ENCODE measurements at regions of chr1 and their contacts with region 1.

Region 1: DNA sequence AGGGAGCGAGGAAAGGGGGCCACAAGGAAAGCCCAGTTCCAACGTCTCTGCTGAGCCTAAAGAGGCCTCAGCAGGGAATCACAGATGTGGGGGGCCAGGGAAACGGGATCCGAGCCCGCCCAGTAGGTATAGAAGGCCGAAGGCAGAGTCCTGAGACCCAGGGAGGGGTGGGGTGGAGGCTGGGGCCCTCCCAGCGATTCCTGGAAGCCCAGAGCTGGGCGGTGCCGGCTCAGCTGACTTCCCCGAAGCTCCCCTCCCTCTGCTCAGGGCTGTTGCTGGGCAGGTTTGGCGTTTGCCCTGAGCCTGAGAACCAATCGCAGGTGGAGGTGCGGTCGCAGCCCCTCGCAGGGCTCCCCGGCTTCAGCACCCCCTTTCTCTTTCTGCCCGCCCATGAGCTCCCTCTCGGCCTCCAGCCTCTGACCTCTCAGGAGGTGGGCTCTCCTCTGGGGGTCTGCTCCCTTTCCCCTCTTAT is 12.8 kb downstream of the ADAMTSL4 start:
- DNase-seq: peak; percentile 85 to 92
- H3K4me3 ChIP-seq: peak overlapping the region; percentile 76
- H3K27ac ChIP-seq: peak overlapping the region; percentile 98
- H3K4me1 ChIP-seq: peaks cover 50% of the 10 kb centered on the region
- H3K27me3 ChIP-seq: no peaks in the 10 kb centered on the region
- CTCF ChIP-seq: no peak

Region 2: GRCh38 chr1:150578965-150579798 is 17.2 kb after region 1 on chr1 and contains the start of gene MCL1:
- CTCF ChIA-PET with region 1: interaction called, 11 read pairs
- POLR2A ChIA-PET with region 1: interaction called, 42 read pairs
- intact Hi-C with region 1: loop called (anchors 1 kb)
- DNase-seq: peak; percentile 90
- H3K4me3 ChIP-seq: peak within 1 kb of the TSS; percentile 73
- H3K27ac ChIP-seq: peak within 1 kb of the TSS; percentile 93
- H3K4me1 ChIP-seq: peaks cover 32% of the 10 kb centered on the region
- H3K27me3 ChIP-seq: no peaks in the 10 kb centered on the region
- CTCF ChIP-seq: no peak
- total RNA-seq, gene MCL1: 145 and 178 TPM in 2 replicates

Region 3: GRCh38 chr1:150621497-150622302 is 59.7 kb after region 1 on chr1:
- CTCF ChIA-PET with region 1: interaction called, 10 read pairs
- POLR2A ChIA-PET with region 1: interaction called, 9 read pairs
- intact Hi-C with region 1: no loop called
- DNase-seq: no peak
- H3K4me3 ChIP-seq: no peak overlapping the region
- H3K27ac ChIP-seq: peak overlapping the region; percentile 9; the same call in 1 of the 2 replicates
- H3K4me1 ChIP-seq: peaks cover 57% of the 10 kb centered on the region
- H3K27me3 ChIP-seq: no peaks in the 10 kb centered on the region
- CTCF ChIP-seq: peak; percentile 73

Region 4: DNA sequence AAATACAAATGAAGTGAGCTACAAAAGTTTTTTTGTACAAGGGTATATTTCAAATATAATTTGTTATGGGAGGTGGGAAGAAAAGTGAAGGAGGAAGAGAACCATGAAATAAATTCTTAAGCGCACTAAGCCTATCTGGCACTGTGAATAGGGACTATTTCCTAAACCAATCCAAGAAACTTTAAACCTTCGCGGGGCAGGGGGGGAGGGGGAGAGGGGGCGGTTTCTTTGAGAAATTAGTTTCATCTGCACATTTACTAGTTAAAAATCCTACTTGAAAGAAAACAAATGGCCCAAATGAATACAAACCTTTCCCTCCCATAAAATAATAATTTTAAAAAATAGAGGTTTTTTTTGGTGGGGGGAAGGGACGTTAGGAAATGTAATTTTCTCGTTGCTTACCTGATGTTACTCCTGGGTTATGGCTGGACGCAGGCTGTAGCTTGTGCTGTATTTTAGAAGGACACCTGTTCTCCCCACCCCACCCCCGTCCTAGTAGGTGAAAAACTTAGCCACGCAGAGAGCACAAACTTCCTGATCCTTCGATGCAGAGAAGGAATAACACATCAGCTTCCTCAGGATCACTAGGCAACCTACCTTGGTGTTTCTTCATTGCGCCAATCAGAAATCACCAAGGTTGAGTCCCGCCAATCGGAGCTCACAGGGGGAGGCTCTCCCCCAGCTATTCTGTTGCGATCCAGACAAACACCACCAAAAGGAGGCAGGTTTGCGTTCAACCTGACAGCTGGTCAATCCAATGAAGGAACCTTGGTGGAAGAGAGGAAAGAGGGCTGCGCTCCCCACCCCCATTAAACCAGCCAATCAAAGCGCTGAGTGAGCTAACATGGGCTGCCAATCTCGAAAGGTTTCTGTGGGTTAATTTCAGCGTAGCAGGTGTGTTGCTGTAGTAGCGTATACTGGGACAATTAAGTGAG is 134.8 kb after region 1 on chr1 and contains the start of gene GOLPH3L:
- CTCF ChIA-PET with region 1: interaction called, 5 read pairs
- POLR2A ChIA-PET with region 1: interaction called, 9 read pairs
- intact Hi-C with region 1: loop called (anchors 5 kb)
- DNase-seq: peak; percentile 95 to 99
- H3K4me3 ChIP-seq: peak within 1 kb of the TSS; percentile 83
- H3K27ac ChIP-seq: peak within 1 kb of the TSS; percentile 40
- H3K4me1 ChIP-seq: peaks cover 10% of the 10 kb centered on the region
- H3K27me3 ChIP-seq: no peaks in the 10 kb centered on the region
- CTCF ChIP-seq: no peak
- total RNA-seq, gene GOLPH3L: 36.5 and 52.7 TPM in 2 replicates

Region 5: DNA sequence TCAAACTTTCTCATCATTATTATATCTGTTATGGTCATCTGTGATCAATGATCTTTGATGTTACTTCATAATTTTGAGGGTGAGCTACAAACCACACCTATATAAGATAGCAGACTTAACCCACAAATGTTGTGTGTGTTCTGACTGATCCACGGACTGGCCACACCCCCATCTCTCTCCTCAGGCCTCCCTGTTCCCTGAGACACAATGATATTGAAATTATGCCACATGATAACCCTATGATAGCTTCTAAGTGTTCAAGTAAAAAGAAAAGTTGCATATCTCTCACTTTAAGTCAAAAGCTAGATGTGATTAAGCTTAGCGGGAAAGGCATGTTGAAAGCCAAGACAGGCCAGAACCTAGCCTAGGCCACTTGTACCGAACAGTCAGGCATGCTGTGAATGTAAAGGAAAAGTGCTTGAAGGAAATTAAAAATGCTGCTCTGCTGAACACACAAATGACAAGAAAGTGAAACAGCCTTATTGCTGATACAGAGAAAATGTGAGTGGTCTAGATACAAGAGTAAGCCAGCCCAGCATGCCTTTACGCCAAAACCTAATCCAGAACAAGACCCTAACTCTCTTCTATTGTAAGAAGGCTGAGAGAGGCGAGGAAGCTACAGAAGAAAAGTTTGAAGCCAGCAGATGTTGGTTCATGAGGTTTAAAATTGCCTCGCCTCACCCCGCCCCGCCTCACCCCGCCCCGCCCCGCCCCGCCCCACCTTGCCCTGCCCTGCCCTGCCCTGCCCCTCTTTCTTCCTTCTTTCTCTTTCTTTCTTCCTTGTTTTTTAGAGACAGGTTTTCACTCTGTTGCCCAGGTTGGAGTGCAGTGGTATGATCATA is 187.1 kb after region 1 on chr1:
- CTCF ChIA-PET with region 1: no interaction called
- POLR2A ChIA-PET with region 1: no interaction called
- intact Hi-C with region 1: no loop called
- DNase-seq: no peak
- H3K4me3 ChIP-seq: no peak overlapping the region
- H3K27ac ChIP-seq: no peak overlapping the region
- H3K4me1 ChIP-seq: no peaks in the 10 kb centered on the region
- H3K27me3 ChIP-seq: no peaks in the 10 kb centered on the region
- CTCF ChIP-seq: no peak

Region 6: GRCh38 chr1:150925816-150926741 is 364.1 kb after region 1 on chr1 and contains the start of gene SETDB1:
- CTCF ChIA-PET with region 1: interaction called, 7 read pairs
- POLR2A ChIA-PET with region 1: interaction called, 11 read pairs
- intact Hi-C with region 1: loop called (anchors 5 kb)
- DNase-seq: peak; percentile 91 to 95
- H3K4me3 ChIP-seq: peak within 1 kb of the TSS; percentile 67
- H3K27ac ChIP-seq: peak within 1 kb of the TSS; percentile 79
- H3K4me1 ChIP-seq: peaks cover 14% of the 10 kb centered on the region
- H3K27me3 ChIP-seq: no peaks in the 10 kb centered on the region
- CTCF ChIP-seq: no peak
- total RNA-seq, gene SETDB1: 45.6 and 51.1 TPM in 2 replicates

Region 7: GRCh38 chr1:151047925-151048645 is 486.1 kb after region 1 on chr1:
- CTCF ChIA-PET with region 1: no interaction called
- POLR2A ChIA-PET with region 1: no interaction called
- intact Hi-C with region 1: no loop called
- DNase-seq: peak; percentile 57 to 63
- H3K4me3 ChIP-seq: peak overlapping the region; percentile 66
- H3K27ac ChIP-seq: peak overlapping the region; percentile 9
- H3K4me1 ChIP-seq: peaks cover 5% of the 10 kb centered on the region
- H3K27me3 ChIP-seq: no peaks in the 10 kb centered on the region
- CTCF ChIP-seq: no peak; the same call in 1 of the 2 replicates

Region 8: GRCh38 chr1:151059078-151059907 is 497.3 kb after region 1 on chr1 and contains the start of gene CDC42SE1:
- CTCF ChIA-PET with region 1: no interaction called
- POLR2A ChIA-PET with region 1: no interaction called
- intact Hi-C with region 1: loop called (anchors 10 kb)
- DNase-seq: peak; percentile 59 to 74
- H3K4me3 ChIP-seq: peak within 1 kb of the TSS; percentile 82
- H3K27ac ChIP-seq: no peak within 1 kb of the TSS
- H3K4me1 ChIP-seq: peaks cover 43% of the 10 kb centered on the region
- H3K27me3 ChIP-seq: no peaks in the 10 kb centered on the region
- CTCF ChIP-seq: peak; percentile 72
- total RNA-seq, gene CDC42SE1: 59.4 and 62.8 TPM in 2 replicates

Measured in PC-9 (cell line).